PC-9 (cell line): ENCODE measurements at regions of chr7 and their contacts with region 1.

Region 1: DNA sequence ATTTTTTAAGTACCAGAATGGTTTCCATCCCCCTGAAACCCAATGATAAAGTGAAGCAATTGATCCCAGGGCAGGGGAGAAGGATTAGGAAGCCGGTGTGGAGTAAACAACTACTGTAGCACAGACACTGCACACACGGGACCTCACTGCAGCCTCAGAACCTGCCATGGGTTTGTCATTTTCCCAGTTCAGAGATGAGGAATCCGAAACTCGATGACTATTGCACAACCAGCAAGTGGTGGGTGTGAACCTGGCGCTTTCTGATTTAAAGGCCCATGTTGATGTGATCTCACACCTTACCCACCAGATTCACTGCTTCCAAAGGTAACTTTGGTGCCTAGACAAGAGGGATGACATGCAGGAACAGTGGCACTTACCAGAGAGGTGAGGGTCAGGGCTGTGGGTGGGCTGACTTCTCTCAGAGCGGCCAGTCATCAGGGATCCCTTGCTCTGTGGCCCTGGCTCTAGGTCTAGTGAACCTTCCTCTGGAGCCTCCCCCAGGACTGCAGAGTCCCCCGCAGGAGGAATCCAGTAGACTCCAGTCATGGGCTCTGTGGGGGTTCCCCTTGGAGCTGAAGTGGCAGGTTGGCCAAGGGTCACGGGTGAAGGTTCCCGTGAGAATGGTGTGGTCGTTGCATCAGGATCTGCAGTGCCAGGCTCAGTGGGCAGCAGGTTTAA is 62.8 kb downstream of the PKD1L1 start:
- DNase-seq: no peak
- H3K4me3 ChIP-seq: no peak overlapping the region
- H3K27ac ChIP-seq: no peak overlapping the region
- H3K4me1 ChIP-seq: peaks cover 11% of the 10 kb centered on the region; the same call in 1 of the 2 replicates
- H3K27me3 ChIP-seq: 0 out of 2 replicates have a peak, but pooled peaks cover 6% of the 10 kb centered on the region
- CTCF ChIP-seq: no peak

Region 2: GRCh38 chr7:47335557-47336471 is 549.6 kb before region 1 on chr7:
- CTCF ChIA-PET with region 1: no interaction called
- POLR2A ChIA-PET with region 1: interaction called, 24 read pairs
- intact Hi-C with region 1: no loop called
- DNase-seq: no peak
- H3K4me3 ChIP-seq: no peak overlapping the region
- H3K27ac ChIP-seq: no peak overlapping the region
- H3K4me1 ChIP-seq: no peaks in the 10 kb centered on the region
- H3K27me3 ChIP-seq: no peaks in the 10 kb centered on the region
- CTCF ChIP-seq: no peak

Region 3: DNA sequence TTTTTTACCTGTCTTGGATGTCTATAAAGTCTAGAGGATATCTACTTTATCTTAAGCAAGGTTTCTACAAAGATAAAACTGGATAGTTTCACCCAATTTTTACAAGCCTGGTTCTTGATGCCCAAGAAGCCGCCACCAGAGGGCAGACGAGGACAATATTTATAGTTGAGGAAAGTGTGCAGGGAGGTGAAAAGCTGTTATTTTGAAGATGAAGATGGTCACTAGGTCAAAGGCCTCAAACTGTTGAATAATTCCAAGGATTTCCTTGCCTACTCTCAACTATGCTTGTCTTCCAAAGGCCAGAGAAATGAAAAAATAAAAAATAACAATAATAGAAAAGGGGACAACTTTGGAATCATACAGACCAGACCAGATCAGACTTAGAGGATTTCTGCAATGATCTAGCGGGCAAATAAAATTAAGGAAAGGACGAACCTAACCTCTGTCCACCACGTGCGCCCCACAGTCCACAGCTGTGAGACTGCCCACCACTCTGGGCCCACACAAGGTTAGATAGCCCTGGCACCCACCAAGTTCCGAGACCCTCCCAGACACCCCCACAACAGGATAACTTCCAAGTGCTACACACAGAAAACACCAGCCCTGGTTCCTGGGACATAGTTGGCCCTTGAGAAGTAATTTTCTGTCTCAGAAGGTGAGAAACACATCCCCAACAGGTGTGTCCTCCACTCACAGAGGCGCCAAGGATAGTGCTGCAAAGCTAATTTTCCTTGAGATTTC is 60.0 kb after region 1 on chr7:
- CTCF ChIA-PET with region 1: no interaction called
- POLR2A ChIA-PET with region 1: no interaction called
- intact Hi-C with region 1: no loop called
- DNase-seq: peak; percentile 58 to 66
- H3K4me3 ChIP-seq: no peak overlapping the region
- H3K27ac ChIP-seq: no peak overlapping the region
- H3K4me1 ChIP-seq: peaks cover 29% of the 10 kb centered on the region
- H3K27me3 ChIP-seq: no peaks in the 10 kb centered on the region
- CTCF ChIP-seq: peak; percentile 99